Right ventricle myocardium inferior (tissue), 1 donor: ENCODE measurements at regions of chr1 and their contacts with region 1.

Region 1: DNA sequence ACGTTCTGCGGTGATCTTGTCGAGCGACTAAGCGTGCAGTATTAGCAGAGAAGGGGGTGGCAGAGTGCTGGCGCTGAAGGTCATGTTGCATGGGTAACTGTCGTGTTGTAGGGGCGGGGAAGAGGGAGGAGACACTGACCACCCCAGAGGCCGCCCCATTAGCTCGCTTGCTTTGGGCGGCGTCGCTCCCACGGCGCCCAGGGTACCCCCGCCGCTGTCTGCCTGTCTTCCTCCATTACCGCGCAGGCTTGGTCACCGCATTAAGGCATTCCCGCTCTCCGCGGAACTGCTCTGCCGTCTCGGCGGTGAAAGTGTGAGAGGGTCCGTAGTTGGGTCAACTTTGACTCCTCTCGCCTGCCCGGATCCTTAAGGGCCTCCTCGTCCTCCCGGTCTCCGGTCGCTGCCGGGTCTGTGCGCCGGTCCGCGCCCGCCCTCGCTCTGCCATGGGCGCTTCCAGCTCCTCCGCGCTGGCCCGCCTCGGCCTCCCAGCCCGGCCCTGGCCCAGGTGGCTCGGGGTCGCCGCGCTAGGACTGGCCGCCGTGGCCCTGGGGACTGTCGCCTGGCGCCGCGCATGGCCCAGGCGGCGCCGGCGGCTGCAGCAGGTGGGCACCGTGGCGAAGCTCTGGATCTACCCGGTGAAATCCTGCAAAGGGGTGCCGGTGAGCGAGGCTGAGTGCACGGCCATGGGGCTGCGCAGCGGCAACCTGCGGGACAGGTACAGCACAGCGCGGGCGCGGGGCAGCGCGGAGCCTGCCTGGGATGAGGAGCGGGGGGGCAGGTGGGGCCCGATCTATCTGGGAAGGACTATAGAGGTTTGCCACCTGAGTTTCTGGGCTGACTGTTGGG is at the start of gene MTARC2:
- DNase-seq: peak; percentile 90
- ATAC-seq: peak; percentile 98
- total RNA-seq, gene MTARC2: 27.4 TPM

Region 2: DNA sequence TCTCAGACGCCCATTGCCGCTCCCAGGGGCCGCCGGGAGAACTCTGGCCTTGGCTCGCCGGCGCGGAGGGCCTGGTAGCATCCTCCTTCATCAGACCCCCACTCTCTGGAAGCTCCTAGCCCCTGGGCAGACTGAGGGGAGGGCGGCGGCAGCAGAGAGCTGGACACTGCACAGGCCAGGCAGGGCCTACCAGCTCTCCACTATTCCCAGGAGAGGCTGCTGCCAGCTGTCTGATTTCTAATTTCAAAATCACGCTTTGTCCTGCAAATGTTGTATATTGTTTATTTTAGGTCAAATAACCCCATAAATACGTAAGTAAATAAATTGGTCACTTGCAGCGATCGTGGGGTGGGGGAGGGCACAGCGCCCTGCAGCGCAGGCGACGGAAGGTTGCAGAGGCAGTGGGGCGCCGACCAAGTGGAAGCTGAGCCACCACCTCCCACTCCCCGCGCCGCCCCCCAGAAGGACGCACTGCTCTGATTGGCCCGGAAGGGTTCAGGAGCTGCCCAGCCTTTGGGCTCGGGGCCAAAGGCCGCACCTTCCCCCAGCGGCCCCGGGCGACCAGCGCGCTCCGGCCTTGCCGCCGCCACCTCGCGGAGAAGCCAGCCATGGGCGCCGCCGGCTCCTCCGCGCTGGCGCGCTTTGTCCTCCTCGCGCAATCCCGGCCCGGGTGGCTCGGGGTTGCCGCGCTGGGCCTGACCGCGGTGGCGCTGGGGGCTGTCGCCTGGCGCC is 38.2 kb after region 1 on chr1 and contains the start of gene MTARC1:
- intact Hi-C with region 1: loop called (anchors 5 kb)
- DNase-seq: peak; percentile 89
- ATAC-seq: peak; percentile 88
- total RNA-seq, gene MTARC1: 7.9 TPM